Activated CD4-positive, alpha-beta T cell treated with anti-CD3 and anti-CD28 coated beads for 36 hours (primary cell): ENCODE measurements at regions of chr5 and their contacts with region 1.

Region 1: DNA sequence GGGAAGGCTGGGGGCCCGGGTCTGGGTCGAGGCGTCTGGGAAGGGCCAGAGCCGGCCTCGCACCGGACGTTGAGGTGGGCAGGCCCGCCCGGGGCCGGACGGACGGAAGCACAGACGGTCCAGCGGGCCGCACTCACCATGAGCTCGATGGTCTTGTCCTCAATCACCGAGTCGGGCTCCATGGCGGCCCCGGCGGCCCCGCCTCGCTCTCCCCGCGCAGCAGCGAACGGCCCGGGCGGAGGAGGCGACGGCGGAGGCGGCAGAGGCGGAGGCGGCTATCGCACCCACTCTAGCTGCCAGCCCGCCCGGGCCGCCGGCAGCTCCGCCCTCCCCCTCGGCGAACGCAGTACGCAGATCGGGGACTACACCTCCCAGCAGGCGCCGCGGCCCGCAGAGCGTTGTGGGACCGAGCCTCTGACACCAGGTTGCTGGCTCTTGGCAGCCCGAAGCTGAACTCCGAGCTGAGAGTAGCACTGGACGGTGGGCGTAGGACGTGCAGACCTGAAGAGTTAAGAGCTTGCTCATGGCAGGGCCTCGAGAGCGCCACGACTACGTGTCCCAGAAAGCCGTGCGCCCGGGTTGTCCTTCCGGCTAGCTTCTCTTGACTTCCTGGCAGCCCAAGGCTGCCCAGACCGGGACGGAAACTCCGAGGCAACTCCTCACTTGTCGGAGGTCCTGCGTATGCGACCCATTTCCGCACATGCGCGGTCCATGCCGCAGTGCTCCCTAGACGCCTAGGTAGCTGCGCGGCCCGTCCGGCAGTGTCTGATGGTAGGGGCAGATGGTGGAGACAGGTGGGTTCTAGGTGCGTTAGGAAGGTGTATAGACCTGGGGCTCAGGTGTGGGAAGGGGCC is at the start of gene FBXW11:
- DNase-seq: peak; percentile 97
- ATAC-seq: peak; percentile 85
- H3K4me3 Mint-ChIP-seq: peak within 1 kb of the TSS; percentile 92
- H3K27ac Mint-ChIP-seq: peak within 1 kb of the TSS; percentile 98
- H3K4me1 Mint-ChIP-seq: peaks cover 43% of the 10 kb centered on the region
- H3K27me3 Mint-ChIP-seq: no peaks in the 10 kb centered on the region
- total RNA-seq, gene FBXW11: 33.8 to 39.5 TPM

Region 2: DNA sequence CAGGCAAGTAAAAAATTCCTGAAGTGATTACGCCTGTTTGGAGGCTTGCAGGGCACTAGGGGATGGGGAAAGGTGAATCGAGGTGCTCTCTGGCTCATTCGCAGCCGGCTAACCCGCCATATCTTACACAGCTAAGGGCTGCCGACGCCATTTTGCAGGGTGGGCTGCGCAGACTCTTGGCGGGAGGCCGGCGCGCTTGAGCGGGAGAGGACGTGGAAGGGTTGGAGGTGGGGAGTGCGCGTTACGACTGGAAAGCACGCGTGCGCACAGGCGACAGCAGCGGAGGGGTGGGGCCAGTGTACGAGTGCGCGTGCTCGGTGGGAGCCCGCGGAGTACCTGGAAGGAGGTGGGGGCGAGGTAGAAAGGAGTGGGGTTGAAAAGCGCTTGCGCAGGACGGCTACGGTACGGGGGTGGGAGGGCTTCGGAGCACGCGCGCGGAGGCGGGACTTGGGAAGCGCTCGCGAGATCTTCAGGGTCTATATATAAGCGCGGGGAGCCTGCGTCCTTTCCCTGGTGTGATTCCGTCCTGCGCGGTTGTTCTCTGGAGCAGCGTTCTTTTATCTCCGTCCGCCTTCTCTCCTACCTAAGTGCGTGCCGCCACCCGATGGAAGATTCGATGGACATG is 619.1 kb before region 1 on chr5 and contains the start of gene NPM1:
- CTCF ChIA-PET with region 1: no interaction called
- POLR2A ChIA-PET with region 1: interaction called, 3 read pairs
- intact Hi-C with region 1: loop called (anchors 1 kb)
- DNase-seq: peak; percentile 99
- ATAC-seq: peak; percentile 83
- H3K4me3 Mint-ChIP-seq: peak within 1 kb of the TSS; percentile 88
- H3K27ac Mint-ChIP-seq: peak within 1 kb of the TSS; percentile 99
- H3K4me1 Mint-ChIP-seq: peaks cover 37% of the 10 kb centered on the region
- H3K27me3 Mint-ChIP-seq: no peaks in the 10 kb centered on the region
- total RNA-seq, gene NPM1: 3,156 to 3,905 TPM

Region 3: DNA sequence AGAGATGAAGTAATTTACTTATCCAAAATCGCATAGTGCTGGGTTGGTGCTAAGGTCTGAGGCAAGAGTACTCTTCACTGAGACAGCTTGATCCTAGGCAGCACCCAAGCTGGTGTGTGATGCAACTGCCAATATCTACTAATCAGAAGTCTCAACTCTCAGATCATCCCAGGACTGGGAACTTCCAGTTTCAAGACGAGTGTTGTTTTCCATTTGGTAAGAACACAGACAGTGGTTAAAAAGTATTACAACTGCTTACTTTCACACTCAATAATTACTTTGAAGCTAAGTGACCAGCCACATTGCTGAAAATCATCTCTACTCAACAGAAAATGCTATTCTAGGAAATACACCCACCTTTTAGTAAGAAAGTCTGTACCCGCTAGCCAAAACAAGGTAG is 45.4 kb before region 1 on chr5:
- CTCF ChIA-PET with region 1: interaction called, 5 read pairs
- POLR2A ChIA-PET with region 1: interaction called, 4 read pairs
- intact Hi-C with region 1: loop called (anchors 1 kb)
- DNase-seq: peak; percentile 65
- ATAC-seq: peak; percentile 64
- H3K4me3 Mint-ChIP-seq: no peak overlapping the region
- H3K27ac Mint-ChIP-seq: peak overlapping the region; percentile 72
- H3K4me1 Mint-ChIP-seq: peaks cover 92% of the 10 kb centered on the region
- H3K27me3 Mint-ChIP-seq: no peaks in the 10 kb centered on the region

Region 4: GRCh38 chr5:171984748-171985419 is 21.7 kb before region 1 on chr5:
- CTCF ChIA-PET with region 1: interaction called, 14 read pairs
- POLR2A ChIA-PET with region 1: interaction called, 8 read pairs
- intact Hi-C with region 1: loop called (anchors 1 to 2 kb)
- DNase-seq: peak; percentile 64
- ATAC-seq: peak; percentile 83
- H3K4me3 Mint-ChIP-seq: no peak overlapping the region
- H3K27ac Mint-ChIP-seq: peak overlapping the region; percentile 56
- H3K4me1 Mint-ChIP-seq: peaks cover 48% of the 10 kb centered on the region
- H3K27me3 Mint-ChIP-seq: no peaks in the 10 kb centered on the region